Naive thymus-derived CD4-positive, alpha-beta T cell (primary cell): ENCODE measurements at regions of chr21 and their contacts with region 1.

Region 1: GRCh38 chr21:42973991-42974831 is at the start of gene PKNOX1:
- DNase-seq: peak; percentile 98 to 100 (median 99)
- ATAC-seq: peak; percentile 91
- H3K4me3 ChIP-seq: peak within 1 kb of the TSS; percentile 85
- H3K4me3 Mint-ChIP-seq: peak within 1 kb of the TSS; percentile 78 to 93 (median 88)
- H3K27ac ChIP-seq: peak within 1 kb of the TSS; percentile 94
- H3K27ac Mint-ChIP-seq: peak within 1 kb of the TSS; percentile 78 to 95 (median 93)
- H3K4me1 ChIP-seq: peaks cover 7 to 11% of the 10 kb centered on the region in 2 donors
- H3K4me1 Mint-ChIP-seq: peaks cover 0 to 36% (median 29%) of the 10 kb centered on the region in 7 donors
- H3K27me3 ChIP-seq: no peaks in the 10 kb centered on the region
- H3K27me3 Mint-ChIP-seq: no peaks in the 10 kb centered on the region
- total RNA-seq, gene PKNOX1: 14.7 to 24.7 (median 20.8) TPM

Region 2: DNA sequence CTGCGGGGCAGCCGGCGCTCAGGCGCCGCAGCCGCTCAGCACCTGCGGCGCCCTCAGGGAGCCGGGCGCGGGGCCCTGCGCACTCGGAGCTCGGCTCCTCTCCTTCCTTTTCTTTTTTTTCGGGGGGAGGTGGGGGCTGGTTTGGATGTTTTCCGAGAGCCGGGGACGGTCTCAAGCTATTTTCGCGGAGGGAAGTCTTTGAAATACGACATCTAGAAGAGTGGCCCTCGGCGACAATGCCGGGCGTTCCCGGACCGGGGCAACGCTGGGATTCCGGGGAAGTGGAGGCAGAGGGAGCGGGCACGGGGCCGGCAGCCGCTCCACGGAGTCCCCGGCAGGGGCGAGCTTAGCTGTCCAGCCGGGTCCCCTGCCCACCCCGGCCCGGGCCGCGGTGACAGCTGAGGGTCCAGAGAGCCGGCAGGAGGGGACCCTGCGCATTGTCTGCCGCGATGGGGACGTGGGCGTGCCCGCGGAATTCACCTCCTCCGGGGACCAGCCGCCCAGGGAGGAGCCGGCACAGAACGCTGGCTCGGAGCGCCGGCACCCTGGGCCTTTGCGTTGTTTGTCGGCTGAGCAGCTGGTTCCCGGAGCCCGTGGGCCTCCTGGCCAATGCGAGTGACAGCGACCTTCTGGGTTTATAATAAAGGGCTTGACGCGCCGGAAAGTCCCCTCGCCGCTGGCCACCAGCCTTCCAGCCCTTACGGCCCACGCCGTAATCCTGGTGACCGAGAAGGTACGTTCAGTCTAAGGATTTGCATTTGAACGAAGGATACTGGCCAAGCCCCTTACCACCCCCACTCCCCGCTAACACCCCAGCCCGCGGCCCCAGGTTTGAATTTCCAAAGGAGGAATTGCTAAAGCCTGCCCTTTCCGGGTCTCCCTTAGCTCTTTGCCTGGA is 460.0 kb before region 1 on chr21:
- CTCF ChIA-PET with region 1: no interaction called
- POLR2A ChIA-PET with region 1: no interaction called
- intact Hi-C with region 1: loop called in 1 of 2 experiments (anchors 5 kb)
- DNase-seq: peak in 8 of 9 donors; percentile 42 to 76 (median 54)
- ATAC-seq: peak; percentile 83
- H3K4me3 ChIP-seq: peak overlapping the region; percentile 82
- H3K4me3 Mint-ChIP-seq: peak overlapping the region; percentile 76 to 97 (median 89)
- H3K27ac ChIP-seq: peak overlapping the region; percentile 87
- H3K27ac Mint-ChIP-seq: peak overlapping the region; percentile 58 to 88 (median 84)
- H3K4me1 ChIP-seq: peaks cover 18 to 20% of the 10 kb centered on the region in 2 donors
- H3K4me1 Mint-ChIP-seq: peaks cover 22 to 45% (median 38%) of the 10 kb centered on the region in 7 donors
- H3K27me3 ChIP-seq: no peaks in the 10 kb centered on the region
- H3K27me3 Mint-ChIP-seq: peaks cover 0 to 19% (median 0%) of the 10 kb centered on the region in 5 donors

Region 3: GRCh38 chr21:42892931-42893755 is 81.1 kb before region 1 on chr21 and contains the start of gene NDUFV3:
- CTCF ChIA-PET with region 1: no interaction called
- POLR2A ChIA-PET with region 1: interaction called, 9 read pairs
- intact Hi-C with region 1: loop called (anchors 1 kb)
- DNase-seq: peak; percentile 96 to 100 (median 98)
- ATAC-seq: peak; percentile 96
- H3K4me3 ChIP-seq: peak within 1 kb of the TSS; percentile 94
- H3K4me3 Mint-ChIP-seq: peak within 1 kb of the TSS; percentile 87 to 96 (median 90)
- H3K27ac ChIP-seq: peak within 1 kb of the TSS; percentile 97
- H3K27ac Mint-ChIP-seq: peak within 1 kb of the TSS; percentile 92 to 98 (median 97)
- H3K4me1 ChIP-seq: peaks cover 6 to 8% of the 10 kb centered on the region in 2 donors
- H3K4me1 Mint-ChIP-seq: peaks cover 14 to 25% (median 22%) of the 10 kb centered on the region in 7 donors
- H3K27me3 ChIP-seq: no peaks in the 10 kb centered on the region
- H3K27me3 Mint-ChIP-seq: no peaks in the 10 kb centered on the region
- total RNA-seq, gene NDUFV3: 25.3 to 33.1 (median 30.9) TPM

Region 4: DNA sequence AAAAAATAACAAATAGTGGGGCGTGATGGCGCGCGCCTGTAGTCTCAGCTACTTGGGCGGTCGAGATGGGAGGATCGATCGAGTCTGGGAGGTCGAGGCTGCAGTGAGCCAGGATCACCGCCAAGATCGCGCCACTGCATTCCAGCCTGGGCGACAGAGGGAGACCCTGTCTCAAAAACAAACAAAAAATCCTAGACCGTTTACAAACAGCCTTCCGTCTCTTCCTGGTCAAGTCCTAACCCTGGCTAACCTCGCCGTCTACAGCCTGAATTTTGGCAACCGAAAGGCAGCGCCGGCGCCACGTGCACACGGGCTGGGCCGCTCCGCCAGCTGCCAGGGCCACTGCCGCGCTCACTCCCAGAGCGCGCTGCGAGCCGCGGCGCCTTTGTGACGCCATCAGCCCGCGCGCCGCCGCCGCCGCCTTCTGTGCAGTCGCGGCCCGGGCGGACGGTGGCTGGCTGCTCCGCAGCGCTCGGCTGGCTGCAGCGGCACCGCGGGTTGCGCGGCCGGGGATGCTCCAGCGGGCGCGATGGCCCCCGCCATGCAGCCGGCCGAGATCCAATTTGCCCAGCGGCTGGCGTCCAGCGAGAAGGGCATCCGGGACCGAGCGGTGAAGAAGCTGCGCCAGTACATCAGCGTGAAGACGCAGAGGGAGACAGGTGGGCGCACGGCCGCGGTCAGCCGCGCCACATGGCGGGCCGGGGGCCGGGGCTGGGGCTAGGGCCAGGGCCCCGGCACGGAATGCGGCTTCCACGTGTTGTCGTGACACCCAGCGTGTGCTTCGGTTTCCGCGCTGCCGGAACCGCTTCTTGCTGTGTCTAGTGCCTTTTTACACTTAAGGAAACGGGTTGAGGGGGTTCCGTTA is 685.2 kb after region 1 on chr21 and contains the starts of genes HSF2BP and RRP1B:
- CTCF ChIA-PET with region 1: no interaction called
- POLR2A ChIA-PET with region 1: no interaction called
- intact Hi-C with region 1: loop called (anchors 1 to 10 kb)
- DNase-seq: peak; percentile 73 to 89 (median 84)
- ATAC-seq: peak; percentile 92
- H3K4me3 ChIP-seq: peak within 1 kb of the TSS; percentile 98
- H3K4me3 Mint-ChIP-seq: peak within 1 kb of the TSS; percentile 77 to 97 (median 94)
- H3K27ac ChIP-seq: peak within 1 kb of the TSS; percentile 91
- H3K27ac Mint-ChIP-seq: peak within 1 kb of the TSS; percentile 89 to 98 (median 94)
- H3K4me1 ChIP-seq: peaks cover 31 to 32% of the 10 kb centered on the region in 2 donors
- H3K4me1 Mint-ChIP-seq: peaks cover 33 to 64% (median 50%) of the 10 kb centered on the region in 7 donors
- H3K27me3 ChIP-seq: no peaks in the 10 kb centered on the region
- H3K27me3 Mint-ChIP-seq: no peaks in the 10 kb centered on the region
- total RNA-seq, gene HSF2BP: 0.31 to 1.4 (median 0.91) TPM
- total RNA-seq, gene RRP1B: 23.9 to 44.2 (median 39.6) TPM

Region 5: DNA sequence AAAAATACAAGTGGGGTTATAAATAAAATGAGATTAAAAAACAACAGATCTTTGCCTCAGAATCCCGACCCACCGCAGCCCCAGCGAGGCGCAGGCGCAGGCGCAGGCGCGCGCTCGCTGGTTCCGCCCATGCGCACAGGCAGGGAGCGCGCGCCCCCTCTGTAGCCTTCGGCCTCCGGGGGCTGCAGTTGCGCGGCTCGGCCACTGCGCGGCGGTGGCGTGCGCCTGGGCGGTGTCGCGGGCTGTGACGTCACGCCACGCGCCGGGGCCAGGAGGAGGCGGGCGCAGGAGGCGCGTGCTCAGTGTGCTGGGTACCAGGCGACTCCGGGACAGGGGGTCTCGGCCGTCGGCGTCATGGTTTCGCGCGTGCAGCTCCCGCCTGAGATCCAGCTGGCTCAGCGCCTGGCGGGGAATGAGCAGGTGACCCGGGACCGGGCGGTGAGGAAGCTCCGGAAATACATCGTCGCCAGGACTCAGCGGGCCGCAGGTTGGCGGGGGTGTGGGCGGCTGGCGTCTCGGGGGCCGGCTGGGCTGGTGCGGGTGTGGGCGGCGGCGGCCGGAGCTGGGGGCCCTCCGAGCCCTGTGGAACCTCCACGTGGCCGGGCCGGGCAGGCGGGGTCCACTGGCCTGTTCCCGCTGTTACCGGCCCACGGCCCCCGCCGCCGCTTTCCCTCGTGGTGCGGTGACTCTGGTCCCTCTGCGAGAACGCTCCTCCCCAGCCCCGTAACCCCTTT is 815.2 kb after region 1 on chr21 and contains the start of gene RRP1:
- CTCF ChIA-PET with region 1: no interaction called
- POLR2A ChIA-PET with region 1: no interaction called
- intact Hi-C with region 1: loop called (anchors 1 to 10 kb)
- DNase-seq: peak; percentile 88 to 100 (median 96)
- ATAC-seq: peak; percentile 99
- H3K4me3 ChIP-seq: peak within 1 kb of the TSS; percentile 87
- H3K4me3 Mint-ChIP-seq: peak within 1 kb of the TSS; percentile 86 to 94 (median 92)
- H3K27ac ChIP-seq: peak within 1 kb of the TSS; percentile 84
- H3K27ac Mint-ChIP-seq: peak within 1 kb of the TSS; percentile 74 to 95 (median 91)
- H3K4me1 ChIP-seq: peaks cover 5 to 10% of the 10 kb centered on the region in 2 donors
- H3K4me1 Mint-ChIP-seq: peaks cover 7 to 29% (median 21%) of the 10 kb centered on the region in 7 donors
- H3K27me3 ChIP-seq: no peaks in the 10 kb centered on the region
- H3K27me3 Mint-ChIP-seq: no peaks in the 10 kb centered on the region
- total RNA-seq, gene RRP1: 24.2 to 33.1 (median 28.8) TPM

Region 6: DNA sequence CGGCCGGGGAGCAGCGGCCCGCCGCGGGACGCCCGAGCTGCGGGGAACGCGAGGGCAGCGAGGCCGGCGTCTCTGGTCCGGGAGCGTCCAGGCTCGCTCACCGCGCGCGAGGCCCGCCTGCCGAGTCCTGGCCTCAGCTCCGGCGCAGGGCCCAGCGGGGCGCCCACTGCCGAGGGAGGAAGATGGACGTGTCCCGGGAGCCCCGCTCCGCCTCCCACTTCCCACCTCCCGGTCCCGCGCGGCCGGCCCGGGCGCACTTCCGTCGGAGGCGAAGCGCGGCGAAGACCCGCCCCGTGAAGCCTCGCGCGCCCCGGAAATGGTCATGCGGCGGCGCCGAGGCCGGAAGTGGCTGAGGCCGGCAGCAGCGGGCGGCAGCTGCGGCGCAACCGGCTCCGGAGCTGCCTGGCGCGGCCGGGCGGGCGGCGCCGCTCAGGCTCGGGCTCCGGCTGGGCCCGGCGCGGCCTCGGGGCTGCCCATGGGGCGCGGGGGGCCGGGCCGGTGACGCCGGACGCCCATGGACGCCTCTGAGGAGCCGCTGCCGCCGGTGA is 1037.8 kb after region 1 on chr21 and contains the start of gene TRAPPC10:
- CTCF ChIA-PET with region 1: no interaction called
- POLR2A ChIA-PET with region 1: no interaction called
- intact Hi-C with region 1: loop called in 1 of 2 experiments (anchors 5 kb)
- DNase-seq: peak; percentile 60 to 91 (median 73)
- ATAC-seq: peak; percentile 78
- H3K4me3 ChIP-seq: peak within 1 kb of the TSS; percentile 63
- H3K4me3 Mint-ChIP-seq: peak within 1 kb of the TSS; percentile 87 to 97 (median 93)
- H3K27ac ChIP-seq: peak within 1 kb of the TSS; percentile 92
- H3K27ac Mint-ChIP-seq: peak within 1 kb of the TSS; percentile 92 to 96 (median 95)
- H3K4me1 ChIP-seq: peaks cover 24 to 34% of the 10 kb centered on the region in 2 donors
- H3K4me1 Mint-ChIP-seq: peaks cover 38 to 51% (median 50%) of the 10 kb centered on the region in 7 donors
- H3K27me3 ChIP-seq: no peaks in the 10 kb centered on the region
- H3K27me3 Mint-ChIP-seq: no peaks in the 10 kb centered on the region
- total RNA-seq, gene TRAPPC10: 80.6 to 119 (median 93.2) TPM

Region 7: GRCh38 chr21:44454747-44455523 is 1480.7 kb after region 1 on chr21 and contains the start of gene LRRC3:
- CTCF ChIA-PET with region 1: no interaction called
- POLR2A ChIA-PET with region 1: no interaction called
- intact Hi-C with region 1: loop called in 1 of 2 experiments (anchors 5 kb)
- DNase-seq: peak; percentile 61 to 82 (median 81)
- ATAC-seq: peak; percentile 91
- H3K4me3 ChIP-seq: peak within 1 kb of the TSS; percentile 60
- H3K4me3 Mint-ChIP-seq: peak within 1 kb of the TSS; percentile 68 to 84 (median 77)
- H3K27ac ChIP-seq: peak within 1 kb of the TSS; percentile 55
- H3K27ac Mint-ChIP-seq: peak within 1 kb of the TSS in 4 of 9 donors; percentile 1 to 60 (median 54)
- H3K4me1 ChIP-seq: peaks cover 0 to 6% of the 10 kb centered on the region in 2 donors
- H3K4me1 Mint-ChIP-seq: peaks cover 0 to 10% (median 6%) of the 10 kb centered on the region in 7 donors
- H3K27me3 ChIP-seq: no peaks in the 10 kb centered on the region
- H3K27me3 Mint-ChIP-seq: peaks cover 0 to 33% (median 12%) of the 10 kb centered on the region in 5 donors
- total RNA-seq, gene LRRC3: 0.79 to 3.3 (median 1.0) TPM